Endothelial cell of umbilical vein (primary cell): ENCODE measurements at regions of chr1 and their contacts with region 1.

Region 1: GRCh38 chr1:199780948-199781347 is 246.6 kb upstream of the NR5A2 start:
- DNase-seq: peak; percentile 56
- H3K4me3 ChIP-seq: no peak overlapping the region
- H3K27ac ChIP-seq: peak overlapping the region; percentile 63
- H3K4me1 ChIP-seq: peaks cover 45% of the 10 kb centered on the region
- H3K27me3 ChIP-seq: no peaks in the 10 kb centered on the region
- CTCF ChIP-seq: no peak
- POLR2A ChIP-seq: no peak

Region 2: DNA sequence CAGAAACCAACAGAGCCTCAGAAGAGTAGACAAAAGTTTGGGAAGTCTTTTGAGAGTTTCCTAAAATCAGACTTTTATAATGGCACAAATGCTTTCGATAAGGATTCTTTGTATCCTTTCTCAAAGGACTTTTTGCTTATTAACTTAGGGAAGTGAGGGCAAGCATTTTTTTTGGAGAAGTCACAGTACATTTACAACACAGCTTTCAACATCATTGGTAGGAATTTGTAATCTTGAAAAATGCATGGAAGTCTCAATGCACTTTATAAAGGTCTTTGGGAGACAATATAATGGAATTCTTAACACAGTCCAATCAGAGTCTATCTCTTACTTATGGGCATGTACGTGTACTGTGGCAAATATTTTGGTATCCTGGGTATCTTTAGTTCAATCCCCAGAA is 79.2 kb before region 1 on chr1:
- CTCF ChIA-PET with region 1: no interaction called
- POLR2A ChIA-PET with region 1: no interaction called
- dilution Hi-C with region 1: no loop called
- intact Hi-C with region 1: no loop called
- DNase-seq: no peak
- H3K4me3 ChIP-seq: no peak overlapping the region
- H3K27ac ChIP-seq: no peak overlapping the region
- H3K4me1 ChIP-seq: no peaks in the 10 kb centered on the region
- H3K27me3 ChIP-seq: no peaks in the 10 kb centered on the region
- CTCF ChIP-seq: no peak
- POLR2A ChIP-seq: no peak

Region 3: DNA sequence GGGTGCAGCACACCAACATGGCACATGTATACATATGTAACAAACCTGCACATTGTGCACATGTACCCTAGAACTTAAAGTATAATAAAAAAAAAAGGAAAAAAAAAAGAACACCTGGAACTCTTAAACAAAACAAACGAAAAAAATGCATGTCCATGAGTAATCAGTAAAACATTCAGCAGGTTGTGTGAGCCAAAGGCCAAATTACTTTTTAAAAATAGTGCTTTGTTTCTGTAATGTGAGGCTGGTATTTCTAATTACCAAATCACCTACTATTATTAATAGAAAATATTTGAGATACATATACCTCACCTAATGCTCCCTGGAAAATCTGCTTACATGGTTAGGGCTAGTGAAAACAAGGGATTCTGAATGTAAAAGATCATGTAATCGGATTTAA is 47.8 kb before region 1 on chr1:
- CTCF ChIA-PET with region 1: interaction called, 3 read pairs
- POLR2A ChIA-PET with region 1: no interaction called
- dilution Hi-C with region 1: no loop called
- intact Hi-C with region 1: loop called (anchors 1 kb)
- DNase-seq: peak; percentile 54
- H3K4me3 ChIP-seq: no peak overlapping the region
- H3K27ac ChIP-seq: peak overlapping the region; percentile 63
- H3K4me1 ChIP-seq: peaks cover 38% of the 10 kb centered on the region
- H3K27me3 ChIP-seq: no peaks in the 10 kb centered on the region
- CTCF ChIP-seq: no peak
- POLR2A ChIP-seq: no peak

Region 4: GRCh38 chr1:199742547-199742946 is 38.4 kb before region 1 on chr1:
- CTCF ChIA-PET with region 1: interaction called, 4 read pairs
- POLR2A ChIA-PET with region 1: no interaction called
- dilution Hi-C with region 1: no loop called
- intact Hi-C with region 1: loop called (anchors 2 kb)
- DNase-seq: peak; percentile 86
- H3K4me3 ChIP-seq: no peak overlapping the region
- H3K27ac ChIP-seq: peak overlapping the region; percentile 81
- H3K4me1 ChIP-seq: peaks cover 16% of the 10 kb centered on the region
- H3K27me3 ChIP-seq: no peaks in the 10 kb centered on the region
- CTCF ChIP-seq: no peak
- POLR2A ChIP-seq: no peak

Region 5: GRCh38 chr1:199762572-199762971 is 18.4 kb before region 1 on chr1:
- CTCF ChIA-PET with region 1: no interaction called
- POLR2A ChIA-PET with region 1: no interaction called
- dilution Hi-C with region 1: no loop called
- intact Hi-C with region 1: no loop called
- DNase-seq: no peak
- H3K4me3 ChIP-seq: no peak overlapping the region
- H3K27ac ChIP-seq: no peak overlapping the region
- H3K4me1 ChIP-seq: peaks cover 10% of the 10 kb centered on the region
- H3K27me3 ChIP-seq: no peaks in the 10 kb centered on the region
- CTCF ChIP-seq: no peak
- POLR2A ChIP-seq: no peak